Activated naive CD8-positive, alpha-beta T cell treated with anti-CD3 and anti-CD28 coated beads, Interleukin-2, amount 10 ng/mL, durations not matched to agents 7 days and 5 days (primary cell): ENCODE measurements at regions of chr1 and their contacts with region 1.

Region 1: GRCh38 chr1:40796939-40797667 is 13.5 kb downstream of the KCNQ4 start:
- DNase-seq: no peak
- ATAC-seq: no peak
- H3K4me3 Mint-ChIP-seq: peak overlapping the region; percentile 64
- H3K27ac Mint-ChIP-seq: peak overlapping the region; percentile 84
- H3K4me1 Mint-ChIP-seq: peaks cover 45% of the 10 kb centered on the region
- H3K27me3 Mint-ChIP-seq: no peaks in the 10 kb centered on the region

Region 2: GRCh38 chr1:40736085-40736531 is 61.0 kb before region 1 on chr1:
- POLR2A ChIA-PET with region 1: no interaction called
- DNase-seq: no peak
- ATAC-seq: no peak
- H3K4me3 Mint-ChIP-seq: no peak overlapping the region
- H3K27ac Mint-ChIP-seq: no peak overlapping the region
- H3K4me1 Mint-ChIP-seq: peaks cover 18% of the 10 kb centered on the region
- H3K27me3 Mint-ChIP-seq: no peaks in the 10 kb centered on the region

Region 3: GRCh38 chr1:40780678-40781607 is 16.2 kb before region 1 on chr1:
- POLR2A ChIA-PET with region 1: interaction called, 15 read pairs
- DNase-seq: no peak
- ATAC-seq: no peak
- H3K4me3 Mint-ChIP-seq: no peak overlapping the region
- H3K27ac Mint-ChIP-seq: no peak overlapping the region
- H3K4me1 Mint-ChIP-seq: peaks cover 21% of the 10 kb centered on the region
- H3K27me3 Mint-ChIP-seq: peaks cover 34% of the 10 kb centered on the region

Region 4: GRCh38 chr1:40786171-40786994 is 10.7 kb before region 1 on chr1:
- POLR2A ChIA-PET with region 1: interaction called, 15 read pairs
- DNase-seq: no peak
- ATAC-seq: no peak
- H3K4me3 Mint-ChIP-seq: no peak overlapping the region
- H3K27ac Mint-ChIP-seq: no peak overlapping the region
- H3K4me1 Mint-ChIP-seq: peaks cover 12% of the 10 kb centered on the region
- H3K27me3 Mint-ChIP-seq: peaks cover 34% of the 10 kb centered on the region

Region 5: DNA sequence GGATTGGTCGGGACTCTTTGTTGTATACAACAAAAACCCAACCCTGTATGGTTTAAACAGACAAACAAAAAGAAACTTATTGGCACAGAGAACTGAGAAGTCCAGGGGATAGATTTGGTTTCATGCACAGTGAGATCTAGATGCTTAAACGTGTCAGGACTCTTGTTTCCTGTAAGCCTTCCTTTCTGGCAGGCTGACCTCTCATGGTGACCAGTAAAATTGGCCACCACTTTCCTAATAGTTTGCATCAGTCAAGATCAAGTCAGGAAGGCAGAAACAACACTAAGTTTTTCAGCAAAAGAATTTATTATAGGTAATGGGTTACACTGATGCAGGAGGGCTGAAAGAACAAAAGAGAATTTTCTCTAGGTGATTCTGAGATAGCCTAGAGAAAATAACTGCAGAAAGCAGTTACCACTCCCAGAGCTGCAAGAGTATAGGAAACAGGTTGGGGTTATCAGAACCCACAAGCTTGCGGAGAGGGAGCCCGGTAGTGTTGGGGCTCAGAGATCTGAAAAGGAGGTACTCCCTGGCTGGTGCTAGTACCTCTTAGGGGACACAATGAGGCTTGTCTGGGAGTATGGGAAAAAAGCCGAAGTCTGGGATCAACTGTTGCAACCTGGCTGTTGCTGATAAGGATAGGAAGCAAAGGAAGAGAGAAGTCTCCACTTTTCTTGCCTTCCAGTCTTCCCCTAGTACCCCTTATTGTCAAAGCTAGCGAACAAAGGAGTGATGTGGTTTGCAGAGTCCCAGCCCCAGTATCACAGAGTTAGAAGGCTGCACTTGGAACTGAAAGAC is 43.6 kb after region 1 on chr1:
- POLR2A ChIA-PET with region 1: interaction called, 18 read pairs
- DNase-seq: peak; percentile 60
- ATAC-seq: peak; percentile 88
- H3K4me3 Mint-ChIP-seq: peak overlapping the region; percentile 70
- H3K27ac Mint-ChIP-seq: peak overlapping the region; percentile 94
- H3K4me1 Mint-ChIP-seq: peaks cover 34% of the 10 kb centered on the region
- H3K27me3 Mint-ChIP-seq: peaks cover 2% of the 10 kb centered on the region